ENCODE measurements at regions of chrX and their contacts with region 1.

Region 1: GRCh38 chrX:103941201-103941975 is 21.0 kb upstream of the TMSB15B start:
- DNase-seq: no peak
- H3K4me3 Mint-ChIP-seq: no peak overlapping the region
- H3K27ac Mint-ChIP-seq: no peak overlapping the region
- H3K4me1 Mint-ChIP-seq: peaks cover 35% of the 10 kb centered on the region
- H3K27me3 Mint-ChIP-seq: no peaks in the 10 kb centered on the region

Region 2: GRCh38 chrX:103918581-103919269 is 22.7 kb before region 1 on chrX:
- intact Hi-C with region 1: loop called (anchors 1 kb)
- DNase-seq: peak; percentile 57
- H3K4me3 Mint-ChIP-seq: peak overlapping the region; percentile 93
- H3K27ac Mint-ChIP-seq: peak overlapping the region; percentile 91
- H3K4me1 Mint-ChIP-seq: peaks cover 17% of the 10 kb centered on the region
- H3K27me3 Mint-ChIP-seq: no peaks in the 10 kb centered on the region

Measured in activated T-helper 1 cell treated with anti-CD3 and anti-CD28 coated beads, Interleukin-12 subunit alpha, Interleukin-12 subunit beta, Interleukin-2, Interleukin-4 antibody, amounts not matched to agents 30 ng/mL and 10 ng/mL and 1 ng/mL, durations not matched to agents 14 hours and 24 hours and 36 hours (primary cell).